Natural killer cell (primary cell): ENCODE measurements at regions of chr7 and their contacts with region 1.

Region 1: DNA sequence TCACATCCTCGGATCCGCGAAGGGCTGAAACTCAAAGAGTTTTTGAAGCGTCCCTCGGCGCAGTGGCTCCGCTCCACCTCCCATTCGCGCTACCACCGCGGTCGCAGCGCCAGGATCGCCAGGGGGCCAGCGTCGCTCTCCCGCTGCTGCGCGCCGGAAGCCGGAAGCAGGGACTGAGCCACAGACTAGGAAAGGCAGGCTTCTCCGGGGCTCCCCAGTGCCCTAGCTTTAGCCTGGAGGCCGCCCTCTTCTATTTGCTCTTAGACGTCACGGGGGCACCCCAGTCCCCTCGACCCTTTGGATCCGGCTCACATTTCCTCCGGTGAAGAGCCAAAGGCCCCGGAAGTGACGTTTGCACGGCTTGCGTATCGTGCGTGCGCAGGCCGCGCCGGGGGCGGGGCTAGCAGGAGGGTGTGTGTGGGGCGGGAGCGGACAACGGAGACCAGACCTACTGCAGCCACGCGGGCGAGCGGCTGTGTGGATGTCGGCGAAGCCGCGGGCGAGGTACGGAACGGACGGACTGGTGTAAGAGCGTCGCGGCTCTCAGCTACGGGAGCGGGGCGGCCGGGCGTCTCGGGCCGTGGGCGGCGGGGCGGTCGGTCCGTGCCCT is 25.5 kb downstream of the KCTD7 start:
- DNase-seq: peak; percentile 98 to 99
- ATAC-seq: peak; percentile 93 to 98 (median 95)
- H3K4me3 ChIP-seq: peak overlapping the region; percentile 99
- H3K4me3 Mint-ChIP-seq: peak overlapping the region; percentile 96
- H3K27ac ChIP-seq: peak overlapping the region; percentile 99
- H3K27ac Mint-ChIP-seq: peak overlapping the region; percentile 98 to 99
- H3K4me1 ChIP-seq: peaks cover 21% of the 10 kb centered on the region
- H3K4me1 Mint-ChIP-seq: peaks cover 10 to 32% of the 10 kb centered on the region in 2 donors
- H3K27me3 ChIP-seq: no peaks in the 10 kb centered on the region
- H3K27me3 Mint-ChIP-seq: no peaks in the 10 kb centered on the region
- CTCF ChIP-seq: no peak

Region 2: GRCh38 chr7:66213637-66214036 is 440.6 kb before region 1 on chr7:
- intact Hi-C with region 1: no loop called
- DNase-seq: no peak
- ATAC-seq: no peak
- H3K4me3 ChIP-seq: no peak overlapping the region
- H3K4me3 Mint-ChIP-seq: no peak overlapping the region
- H3K27ac ChIP-seq: no peak overlapping the region
- H3K27ac Mint-ChIP-seq: peak overlapping the region in 1 of 2 donors; percentile 74
- H3K4me1 ChIP-seq: no peaks in the 10 kb centered on the region
- H3K4me1 Mint-ChIP-seq: peaks cover 7 to 8% of the 10 kb centered on the region in 2 donors
- H3K27me3 ChIP-seq: no peaks in the 10 kb centered on the region
- H3K27me3 Mint-ChIP-seq: peaks cover 0 to 1% of the 10 kb centered on the region in 2 donors
- CTCF ChIP-seq: no peak

Region 3: GRCh38 chr7:66591799-66592596 is 62.2 kb before region 1 on chr7:
- intact Hi-C with region 1: loop called (anchors 2 kb)
- DNase-seq: peak; percentile 79 to 95
- ATAC-seq: peak; percentile 94 to 97 (median 95)
- H3K4me3 ChIP-seq: peak overlapping the region; percentile 92
- H3K4me3 Mint-ChIP-seq: peak overlapping the region; percentile 90
- H3K27ac ChIP-seq: peak overlapping the region; percentile 82
- H3K27ac Mint-ChIP-seq: peak overlapping the region; percentile 93 to 97
- H3K4me1 ChIP-seq: peaks cover 30% of the 10 kb centered on the region
- H3K4me1 Mint-ChIP-seq: peaks cover 33 to 50% of the 10 kb centered on the region in 2 donors
- H3K27me3 ChIP-seq: no peaks in the 10 kb centered on the region
- H3K27me3 Mint-ChIP-seq: no peaks in the 10 kb centered on the region
- CTCF ChIP-seq: no peak

Region 4: GRCh38 chr7:66681491-66682349 is 27.5 kb after region 1 on chr7:
- intact Hi-C with region 1: loop called (anchors 1 kb)
- DNase-seq: peak; percentile 94 to 98
- ATAC-seq: peak; percentile 98 to 100 (median 98)
- H3K4me3 ChIP-seq: peak overlapping the region; percentile 100
- H3K4me3 Mint-ChIP-seq: peak overlapping the region; percentile 92
- H3K27ac ChIP-seq: peak overlapping the region; percentile 100
- H3K27ac Mint-ChIP-seq: peak overlapping the region; percentile 95 to 97
- H3K4me1 ChIP-seq: peaks cover 21% of the 10 kb centered on the region
- H3K4me1 Mint-ChIP-seq: peaks cover 21 to 33% of the 10 kb centered on the region in 2 donors
- H3K27me3 ChIP-seq: no peaks in the 10 kb centered on the region
- H3K27me3 Mint-ChIP-seq: no peaks in the 10 kb centered on the region
- CTCF ChIP-seq: no peak

Region 5: DNA sequence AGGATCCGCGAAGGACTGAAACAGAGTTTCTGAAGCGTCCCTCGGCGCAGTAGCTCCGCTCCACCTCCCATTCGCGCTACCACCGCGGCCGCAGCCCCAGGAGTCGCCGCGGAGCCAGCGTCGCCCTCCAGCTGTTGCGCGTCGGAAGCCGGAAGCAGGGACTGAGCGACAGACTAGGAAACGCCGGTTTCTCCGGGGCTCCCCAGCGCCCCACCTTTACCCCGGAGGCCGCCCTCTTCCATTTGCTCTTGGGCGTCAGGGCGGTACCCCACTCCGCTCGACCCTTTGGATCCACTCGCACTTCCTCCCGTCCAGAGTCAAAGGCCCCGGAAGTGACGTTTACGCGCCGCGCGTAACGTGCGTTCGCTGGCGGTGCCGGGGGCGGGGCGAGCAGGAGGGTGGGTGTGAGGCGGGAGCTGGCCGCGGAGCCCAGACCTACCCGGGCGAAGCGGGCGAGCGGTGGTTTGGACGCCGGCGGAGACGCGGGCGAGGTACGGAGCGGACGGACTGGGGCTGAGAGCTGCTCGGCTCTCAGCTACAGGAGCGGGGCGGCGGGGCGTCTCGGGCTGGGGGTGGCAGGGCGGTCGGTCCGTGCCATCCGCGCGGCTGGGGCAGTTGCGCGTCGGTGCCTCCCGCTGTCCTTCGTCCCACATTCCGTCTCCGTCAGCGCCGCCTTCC is 86.2 kb after region 1 on chr7 and contains the start of gene RABGEF1:
- intact Hi-C with region 1: loop called (anchors 1 kb)
- DNase-seq: peak; percentile 96 to 99
- ATAC-seq: peak; percentile 86 to 97 (median 88)
- H3K4me3 ChIP-seq: peak within 1 kb of the TSS; percentile 97
- H3K4me3 Mint-ChIP-seq: peak within 1 kb of the TSS; percentile 95
- H3K27ac ChIP-seq: peak within 1 kb of the TSS; percentile 98
- H3K27ac Mint-ChIP-seq: peak within 1 kb of the TSS; percentile 98
- H3K4me1 ChIP-seq: peaks cover 31% of the 10 kb centered on the region
- H3K4me1 Mint-ChIP-seq: peaks cover 38 to 41% of the 10 kb centered on the region in 2 donors
- H3K27me3 ChIP-seq: no peaks in the 10 kb centered on the region
- H3K27me3 Mint-ChIP-seq: no peaks in the 10 kb centered on the region
- CTCF ChIP-seq: no peak
- total RNA-seq, gene RABGEF1: 26.1 to 38.1 (median 31.7) TPM